ENCODE measurements at regions of chr6 and their contacts with region 1.

Region 1: DNA sequence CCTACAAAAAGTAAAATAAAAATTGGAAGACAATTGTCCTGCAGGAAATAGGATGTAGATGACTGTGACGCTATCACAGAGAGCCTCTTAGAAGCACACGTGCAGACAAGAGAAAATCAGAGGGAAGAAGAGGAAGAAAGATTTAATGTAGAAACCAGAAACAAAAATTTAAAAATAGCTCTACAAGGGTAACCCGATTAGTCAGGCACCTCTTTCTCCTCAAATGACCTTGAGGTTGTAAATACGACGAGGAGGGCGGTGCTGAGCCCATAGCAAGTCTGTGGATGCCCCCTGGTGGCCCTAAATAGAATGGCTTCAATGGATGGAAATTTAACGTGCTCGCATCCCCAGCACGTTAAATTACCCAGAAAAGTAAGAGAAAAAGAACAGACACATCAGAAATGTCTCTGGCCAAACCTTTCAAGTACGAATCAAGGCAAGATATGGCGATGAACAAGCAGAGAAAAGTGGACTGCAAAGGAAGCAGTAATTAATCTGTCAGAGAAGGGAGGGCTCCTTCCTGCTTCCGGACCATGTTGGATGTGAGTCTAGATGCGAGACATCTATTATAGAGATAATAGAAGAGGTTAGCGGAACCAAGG is 4.2 kb upstream of the PRPH2 start:
- DNase-seq: peak; percentile 87
- H3K4me3 ChIP-seq: peak overlapping the region; percentile 40
- H3K27ac ChIP-seq: peak overlapping the region; percentile 49
- H3K27me3 ChIP-seq: no peaks in the 10 kb centered on the region
- CTCF ChIP-seq: peak; percentile 93

Region 2: GRCh38 chr6:42692137-42692911 is 34.3 kb before region 1 on chr6:
- CTCF ChIA-PET with region 1: interaction called, 57 read pairs
- POLR2A ChIA-PET with region 1: interaction called, 5 read pairs
- DNase-seq: no peak
- H3K4me3 ChIP-seq: no peak overlapping the region
- H3K27ac ChIP-seq: peak overlapping the region; percentile 47
- H3K27me3 ChIP-seq: no peaks in the 10 kb centered on the region
- CTCF ChIP-seq: no peak

Region 3: GRCh38 chr6:42714098-42714761 is 12.4 kb before region 1 on chr6:
- CTCF ChIA-PET with region 1: interaction called, 15 read pairs
- POLR2A ChIA-PET with region 1: interaction called, 3 read pairs
- DNase-seq: no peak
- H3K4me3 ChIP-seq: no peak overlapping the region
- H3K27ac ChIP-seq: no peak overlapping the region
- H3K27me3 ChIP-seq: no peaks in the 10 kb centered on the region
- CTCF ChIP-seq: no peak

Region 4: GRCh38 chr6:42782622-42783176 is 56.1 kb after region 1 on chr6:
- CTCF ChIA-PET with region 1: no interaction called
- POLR2A ChIA-PET with region 1: interaction called, 17 read pairs
- DNase-seq: peak; percentile 84
- H3K4me3 ChIP-seq: peak overlapping the region; percentile 81
- H3K27ac ChIP-seq: peak overlapping the region; percentile 96
- H3K27me3 ChIP-seq: no peaks in the 10 kb centered on the region
- CTCF ChIP-seq: no peak

Region 5: GRCh38 chr6:43053545-43054205 is 327.1 kb after region 1 on chr6 and contains the start of gene CUL7:
- CTCF ChIA-PET with region 1: no interaction called
- POLR2A ChIA-PET with region 1: no interaction called
- DNase-seq: peak; percentile 85
- H3K4me3 ChIP-seq: peak within 1 kb of the TSS; percentile 89
- H3K27ac ChIP-seq: peak within 1 kb of the TSS; percentile 93
- H3K27me3 ChIP-seq: no peaks in the 10 kb centered on the region
- CTCF ChIP-seq: no peak
- polyA plus RNA-seq, gene CUL7: 37.5 and 44.8 TPM in 2 replicates